B cell (primary cell): ENCODE measurements at regions of chr2 and their contacts with region 1.

Region 1: GRCh38 chr2:46364797-46365457 is 67.7 kb downstream of the EPAS1 start:
- DNase-seq: peak; percentile 60
- ATAC-seq: peak; percentile 39
- H3K4me3 ChIP-seq: no peak overlapping the region
- H3K4me3 Mint-ChIP-seq: no peak overlapping the region
- H3K27ac ChIP-seq: no peak overlapping the region
- H3K27ac Mint-ChIP-seq: no peak overlapping the region
- H3K4me1 ChIP-seq: peaks cover 13 to 14% of the 10 kb centered on the region in 2 donors
- H3K4me1 Mint-ChIP-seq: peaks cover 21% of the 10 kb centered on the region
- H3K27me3 ChIP-seq: no peaks in the 10 kb centered on the region
- H3K27me3 Mint-ChIP-seq: no peaks in the 10 kb centered on the region
- CTCF ChIP-seq: peak; percentile 94

Region 2: GRCh38 chr2:44981136-44982108 is 1383.5 kb before region 1 on chr2:
- CTCF ChIA-PET with region 1: no interaction called
- POLR2A ChIA-PET with region 1: no interaction called
- intact Hi-C with region 1: loop called (anchors 5 kb)
- DNase-seq: peak; percentile 77
- ATAC-seq: peak; percentile 36
- H3K4me3 ChIP-seq: no peak overlapping the region
- H3K4me3 Mint-ChIP-seq: no peak overlapping the region
- H3K27ac ChIP-seq: no peak overlapping the region
- H3K27ac Mint-ChIP-seq: no peak overlapping the region
- H3K4me1 ChIP-seq: no peaks in the 10 kb centered on the region
- H3K4me1 Mint-ChIP-seq: peaks cover 2% of the 10 kb centered on the region
- H3K27me3 ChIP-seq: peaks cover 0 to 14% (median 5%) of the 10 kb centered on the region in 4 experiments
- H3K27me3 Mint-ChIP-seq: peaks cover 17% of the 10 kb centered on the region
- CTCF ChIP-seq: peak; percentile 91

Region 3: GRCh38 chr2:45585267-45585861 is 779.6 kb before region 1 on chr2:
- CTCF ChIA-PET with region 1: no interaction called
- POLR2A ChIA-PET with region 1: no interaction called
- intact Hi-C with region 1: loop called (anchors 10 kb)
- DNase-seq: peak; percentile 52
- ATAC-seq: peak; percentile 43
- H3K4me3 ChIP-seq: no peak overlapping the region
- H3K4me3 Mint-ChIP-seq: no peak overlapping the region
- H3K27ac ChIP-seq: no peak overlapping the region
- H3K27ac Mint-ChIP-seq: no peak overlapping the region
- H3K4me1 ChIP-seq: no peaks in the 10 kb centered on the region
- H3K4me1 Mint-ChIP-seq: peaks cover 14% of the 10 kb centered on the region
- H3K27me3 ChIP-seq: no peaks in the 10 kb centered on the region
- H3K27me3 Mint-ChIP-seq: no peaks in the 10 kb centered on the region
- CTCF ChIP-seq: peak; percentile 78

Region 4: GRCh38 chr2:45993476-45993991 is 371.4 kb before region 1 on chr2:
- CTCF ChIA-PET with region 1: interaction called, 3 read pairs
- POLR2A ChIA-PET with region 1: no interaction called
- intact Hi-C with region 1: loop called (anchors 2 kb)
- DNase-seq: peak; percentile 64
- ATAC-seq: peak; percentile 31
- H3K4me3 ChIP-seq: no peak overlapping the region
- H3K4me3 Mint-ChIP-seq: no peak overlapping the region
- H3K27ac ChIP-seq: no peak overlapping the region
- H3K27ac Mint-ChIP-seq: peak overlapping the region; percentile 5
- H3K4me1 ChIP-seq: no peaks in the 10 kb centered on the region
- H3K4me1 Mint-ChIP-seq: no peaks in the 10 kb centered on the region
- H3K27me3 ChIP-seq: no peaks in the 10 kb centered on the region
- H3K27me3 Mint-ChIP-seq: no peaks in the 10 kb centered on the region
- CTCF ChIP-seq: peak; percentile 79

Region 5: DNA sequence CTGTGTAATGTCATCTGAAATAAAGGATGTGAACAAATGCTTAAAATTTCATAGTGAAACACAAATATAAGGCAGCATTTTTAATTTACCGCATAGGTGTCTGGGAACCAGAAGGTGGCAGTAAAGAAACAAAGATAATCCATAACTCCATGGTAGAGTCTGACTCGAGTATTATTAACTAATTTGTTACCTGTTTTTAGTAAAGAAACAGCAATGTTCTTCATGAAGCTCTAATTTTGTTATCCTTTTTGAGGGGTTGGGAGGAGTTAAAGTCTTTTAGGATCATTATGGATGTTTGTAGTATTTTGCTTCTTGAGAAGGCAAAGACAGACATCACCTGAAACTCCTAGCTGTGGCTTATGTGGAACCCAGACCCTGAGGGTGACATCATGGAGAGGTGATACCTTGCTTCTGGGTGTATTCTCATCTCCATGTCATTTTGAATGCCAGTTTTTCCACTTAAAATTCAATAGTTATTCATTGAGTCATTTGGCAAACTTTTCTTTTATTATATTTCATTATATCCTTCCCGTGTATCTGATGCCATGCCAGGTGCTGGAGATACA is 353.9 kb before region 1 on chr2:
- CTCF ChIA-PET with region 1: interaction called, 3 read pairs
- POLR2A ChIA-PET with region 1: no interaction called
- intact Hi-C with region 1: loop called (anchors 2 kb)
- DNase-seq: peak; percentile 24
- ATAC-seq: no peak
- H3K4me3 ChIP-seq: no peak overlapping the region
- H3K4me3 Mint-ChIP-seq: no peak overlapping the region
- H3K27ac ChIP-seq: no peak overlapping the region
- H3K27ac Mint-ChIP-seq: no peak overlapping the region
- H3K4me1 ChIP-seq: no peaks in the 10 kb centered on the region
- H3K4me1 Mint-ChIP-seq: no peaks in the 10 kb centered on the region
- H3K27me3 ChIP-seq: no peaks in the 10 kb centered on the region
- H3K27me3 Mint-ChIP-seq: no peaks in the 10 kb centered on the region
- CTCF ChIP-seq: peak; percentile 60

Region 6: GRCh38 chr2:46062637-46063412 is 302.1 kb before region 1 on chr2:
- CTCF ChIA-PET with region 1: interaction called, 5 read pairs
- POLR2A ChIA-PET with region 1: no interaction called
- intact Hi-C with region 1: loop called (anchors 2 kb)
- DNase-seq: peak; percentile 68
- ATAC-seq: peak; percentile 49
- H3K4me3 ChIP-seq: no peak overlapping the region
- H3K4me3 Mint-ChIP-seq: no peak overlapping the region
- H3K27ac ChIP-seq: no peak overlapping the region
- H3K27ac Mint-ChIP-seq: no peak overlapping the region
- H3K4me1 ChIP-seq: no peaks in the 10 kb centered on the region
- H3K4me1 Mint-ChIP-seq: no peaks in the 10 kb centered on the region
- H3K27me3 ChIP-seq: no peaks in the 10 kb centered on the region
- H3K27me3 Mint-ChIP-seq: no peaks in the 10 kb centered on the region
- CTCF ChIP-seq: peak; percentile 80

Region 7: DNA sequence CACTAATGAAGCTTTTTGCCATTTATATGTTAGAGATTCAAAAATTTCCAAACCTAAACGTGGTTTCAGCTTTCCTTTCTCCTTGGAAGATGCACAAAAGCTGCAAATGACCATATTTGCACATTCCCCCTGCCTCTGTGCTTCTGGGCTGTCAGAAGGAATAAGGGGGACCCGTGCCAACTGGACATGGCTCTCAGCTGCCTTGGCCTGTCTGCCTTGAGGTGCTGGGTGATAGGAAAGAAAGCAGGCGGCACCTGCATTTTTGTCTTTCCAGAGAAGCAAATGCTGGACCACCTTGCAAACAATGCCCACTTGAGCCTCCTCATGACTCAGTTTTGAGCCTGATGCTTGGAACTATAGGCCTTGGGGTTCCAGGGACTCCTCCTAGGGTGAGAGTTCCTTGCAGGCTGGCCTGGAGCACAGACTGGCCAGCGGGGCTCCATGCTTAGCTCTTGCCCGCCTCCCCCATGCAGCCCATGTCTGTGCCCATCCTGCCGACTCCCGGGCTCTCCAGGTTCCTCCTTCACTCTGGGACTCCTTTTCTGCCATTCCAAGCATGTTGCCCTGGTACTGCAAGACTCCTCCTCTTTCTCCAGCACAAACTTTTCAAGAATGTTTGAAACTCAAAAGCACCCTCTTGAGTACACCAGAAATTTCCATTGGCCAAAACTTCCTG is 176.7 kb before region 1 on chr2:
- CTCF ChIA-PET with region 1: no interaction called
- POLR2A ChIA-PET with region 1: no interaction called
- intact Hi-C with region 1: no loop called
- DNase-seq: no peak
- ATAC-seq: no peak
- H3K4me3 ChIP-seq: no peak overlapping the region
- H3K4me3 Mint-ChIP-seq: no peak overlapping the region
- H3K27ac ChIP-seq: no peak overlapping the region
- H3K27ac Mint-ChIP-seq: no peak overlapping the region
- H3K4me1 ChIP-seq: no peaks in the 10 kb centered on the region
- H3K4me1 Mint-ChIP-seq: peaks cover 4% of the 10 kb centered on the region
- H3K27me3 ChIP-seq: no peaks in the 10 kb centered on the region
- H3K27me3 Mint-ChIP-seq: no peaks in the 10 kb centered on the region
- CTCF ChIP-seq: no peak